GM12878 (cell line): ENCODE measurements at regions of chr4 and their contacts with region 1.

Region 1: GRCh38 chr4:94516067-94516466 is 64.3 kb downstream of the PDLIM5 start:
- DNase-seq: no peak
- ATAC-seq: no peak
- H3K4me3 ChIP-seq: no peak overlapping the region
- H3K27ac ChIP-seq: no peak overlapping the region
- H3K4me1 ChIP-seq: peaks cover 17% of the 10 kb centered on the region
- H3K27me3 ChIP-seq: no peaks in the 10 kb centered on the region
- CTCF ChIP-seq: no peak
- EP300 ChIP-seq: no peak
- POLR2A ChIP-seq: no peak
- RAD21 ChIP-seq: no peak

Region 2: GRCh38 chr4:94534401-94535312 is 18.6 kb after region 1 on chr4:
- CTCF ChIA-PET with region 1: interaction called, 3 read pairs
- POLR2A ChIA-PET with region 1: interaction called, 3 read pairs
- RAD21 ChIA-PET with region 1: interaction called, 5 read pairs
- SMC1A ChIA-PET with region 1: interaction called, 12 read pairs
- in situ Hi-C with region 1: no loop called
- intact Hi-C with region 1: no loop called
- DNase-seq: peak; percentile 61
- ATAC-seq: peak; percentile 94
- H3K4me3 ChIP-seq: no peak overlapping the region
- H3K27ac ChIP-seq: 0 out of 2 replicates have a peak overlapping the region, but pooled peaks have one; percentile 20
- H3K4me1 ChIP-seq: peaks cover 15% of the 10 kb centered on the region
- H3K27me3 ChIP-seq: no peaks in the 10 kb centered on the region
- CTCF ChIP-seq: no peak
- EP300 ChIP-seq: peak in 1 of 2 experiments; percentile 52; a peak in 1 of 4 replicates
- POLR2A ChIP-seq: no peak
- RAD21 ChIP-seq: no peak